PC-3 (cell line): ENCODE measurements at regions of chr3 and their contacts with region 1.

Region 1: DNA sequence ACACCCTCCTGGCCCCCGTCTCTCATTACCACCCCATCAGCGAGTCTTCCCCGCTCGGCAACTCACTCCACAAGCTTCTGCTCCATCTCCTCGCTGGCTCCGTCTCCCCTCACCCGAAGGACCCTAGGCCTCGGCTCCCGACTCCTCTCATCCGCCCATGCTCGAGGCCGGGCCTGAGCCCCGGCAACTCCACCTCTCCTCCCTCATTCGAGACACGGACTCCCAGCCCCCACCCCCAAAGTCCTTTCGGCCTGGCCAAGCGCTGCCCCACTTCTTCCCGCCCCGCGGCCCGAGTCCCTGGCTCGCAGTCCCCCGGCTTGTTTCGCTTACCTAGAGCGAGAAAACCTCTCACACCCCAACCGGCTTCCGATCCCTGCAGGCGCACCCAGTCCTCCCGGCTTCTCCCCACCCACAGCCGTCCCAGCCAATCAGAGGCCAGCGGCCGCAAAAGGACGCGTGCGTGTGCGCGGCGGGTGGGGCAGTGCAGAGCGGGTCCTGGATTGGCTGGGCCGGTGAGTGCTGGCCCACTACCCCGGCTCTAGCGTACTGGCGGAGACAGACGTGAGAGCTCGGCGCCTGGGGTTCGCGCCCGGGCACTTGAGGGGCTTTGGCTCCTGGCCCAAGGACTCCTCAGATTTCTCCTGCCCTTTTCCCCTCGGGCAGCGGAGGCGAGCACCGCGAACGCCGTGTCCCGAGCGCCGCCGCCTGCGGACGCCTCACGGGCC is at the start of gene HIGD1A:
- DNase-seq: peak; percentile 98
- ATAC-seq: peak; percentile 96
- H3K4me3 ChIP-seq: peak within 1 kb of the TSS; percentile 97
- H3K27ac ChIP-seq: peak within 1 kb of the TSS; percentile 89
- H3K4me1 ChIP-seq: peaks cover 34% of the 10 kb centered on the region
- H3K27me3 ChIP-seq: no peaks in the 10 kb centered on the region
- CTCF ChIP-seq: no peak
- total RNA-seq, gene HIGD1A: 118 and 154 TPM in 2 replicates

Region 2: DNA sequence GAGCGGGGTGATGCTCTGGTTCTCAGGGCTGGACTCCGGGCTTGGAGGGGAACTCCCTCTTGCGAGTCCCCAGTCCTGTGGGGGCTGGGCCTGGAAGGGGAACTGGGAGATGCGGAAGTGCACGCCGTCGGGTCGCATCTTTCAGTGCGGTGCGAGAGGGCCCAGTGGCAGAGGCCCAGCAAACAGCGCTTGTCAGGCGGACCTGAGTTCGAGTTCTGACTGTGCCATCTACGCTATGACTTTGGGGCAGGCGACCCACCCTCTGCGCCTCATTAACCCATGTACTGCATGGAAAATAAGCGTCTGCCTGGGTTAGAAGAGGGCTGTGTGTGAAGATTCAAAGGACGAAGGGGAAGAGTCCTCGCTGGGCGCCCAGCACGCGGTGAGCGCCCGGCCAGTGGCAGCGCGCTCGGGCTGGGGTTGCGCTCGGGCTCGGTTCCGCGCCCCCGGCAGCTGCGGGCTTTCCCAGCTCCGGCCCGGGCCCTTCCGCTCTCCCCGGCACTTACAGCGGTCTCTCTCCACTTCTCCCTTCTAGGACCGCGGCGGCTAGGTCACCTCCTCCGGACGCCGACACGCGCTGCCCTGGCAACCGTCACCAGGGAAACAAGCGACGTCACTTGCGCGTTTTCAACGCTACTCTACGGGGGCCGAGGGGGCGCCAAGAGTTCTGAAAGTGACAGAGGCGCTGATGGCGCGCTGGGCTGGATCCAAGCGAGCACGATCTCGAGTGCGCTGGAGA is 31.4 kb before region 1 on chr3 and contains the start of gene CCDC13:
- CTCF ChIA-PET with region 1: no interaction called
- POLR2A ChIA-PET with region 1: no interaction called
- intact Hi-C with region 1: no loop called
- DNase-seq: no peak
- ATAC-seq: peak; percentile 16; the same call in 1 of the 2 replicates
- H3K4me3 ChIP-seq: no peak within 1 kb of the TSS; the same call in 1 of the 2 replicates
- H3K27ac ChIP-seq: no peak within 1 kb of the TSS
- H3K4me1 ChIP-seq: peaks cover 21% of the 10 kb centered on the region
- H3K27me3 ChIP-seq: no peaks in the 10 kb centered on the region
- CTCF ChIP-seq: no peak
- total RNA-seq, gene CCDC13: 0.47 TPM in 1 of 2 replicates, not detected in the other

Region 3: DNA sequence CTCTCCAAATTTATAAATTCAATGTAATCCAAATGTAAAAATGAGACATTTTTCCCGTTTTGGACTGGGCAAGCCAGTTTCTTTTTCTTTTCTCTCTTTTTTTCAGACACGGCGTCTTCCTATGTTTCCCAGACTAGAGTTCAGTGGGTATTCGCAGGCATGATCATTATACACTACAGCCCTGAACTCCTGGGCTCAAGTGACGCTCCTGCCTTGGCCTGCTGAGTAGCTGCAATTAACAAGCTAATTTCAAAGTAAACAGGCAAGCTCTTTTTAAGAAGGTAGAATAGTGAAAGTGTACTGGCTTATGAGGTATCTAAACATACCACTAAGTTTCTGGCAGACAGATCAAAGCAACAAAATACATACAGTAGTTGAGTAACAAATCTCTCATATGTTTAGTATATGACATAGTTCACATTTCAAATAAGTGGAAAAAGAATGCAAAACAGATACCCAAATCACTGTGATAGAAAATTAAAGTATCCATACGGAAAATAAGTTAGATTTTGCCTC is 13.5 kb before region 1 on chr3:
- CTCF ChIA-PET with region 1: no interaction called
- POLR2A ChIA-PET with region 1: interaction called, 17 read pairs
- intact Hi-C with region 1: no loop called
- DNase-seq: no peak
- ATAC-seq: peak; percentile 53
- H3K4me3 ChIP-seq: no peak overlapping the region
- H3K27ac ChIP-seq: no peak overlapping the region
- H3K4me1 ChIP-seq: no peaks in the 10 kb centered on the region
- H3K27me3 ChIP-seq: no peaks in the 10 kb centered on the region
- CTCF ChIP-seq: no peak

Region 4: DNA sequence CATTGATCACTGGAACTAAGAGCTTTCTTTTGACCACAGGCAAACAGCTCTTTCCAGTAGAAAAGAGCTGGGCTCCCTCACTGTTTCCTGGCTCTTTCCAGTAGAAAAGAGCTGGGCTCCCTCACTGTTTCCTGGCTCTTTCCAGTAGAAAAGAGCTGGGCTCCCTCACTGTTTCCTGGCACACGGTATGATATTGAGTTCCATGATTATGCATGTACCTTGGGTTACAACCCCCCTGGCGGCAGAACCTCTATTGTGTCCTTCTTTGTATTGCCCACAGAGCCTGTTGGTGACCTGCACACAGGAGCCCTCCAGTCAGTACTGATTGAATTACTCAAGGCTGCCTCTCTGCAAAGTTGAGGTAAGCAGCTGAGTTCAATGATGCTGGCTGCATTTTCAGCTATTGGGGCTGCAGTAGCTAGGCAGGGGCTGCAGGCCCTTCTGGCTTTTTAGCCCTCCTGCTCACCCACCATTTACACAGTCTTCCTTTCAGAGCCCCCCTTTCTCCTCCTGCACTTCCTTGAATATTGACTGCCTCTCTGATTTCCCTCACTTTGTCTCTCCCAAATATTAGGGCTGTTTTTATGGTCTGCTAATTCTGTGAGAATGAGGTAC is 15.2 kb after region 1 on chr3:
- CTCF ChIA-PET with region 1: no interaction called
- POLR2A ChIA-PET with region 1: interaction called, 34 read pairs
- intact Hi-C with region 1: loop called (anchors 1 kb)
- DNase-seq: peak; percentile 59
- ATAC-seq: peak; percentile 21
- H3K4me3 ChIP-seq: peak overlapping the region; percentile 32
- H3K27ac ChIP-seq: peak overlapping the region; percentile 99
- H3K4me1 ChIP-seq: peaks cover 59% of the 10 kb centered on the region
- H3K27me3 ChIP-seq: no peaks in the 10 kb centered on the region
- CTCF ChIP-seq: no peak; the same call in 1 of the 2 replicates

Region 5: GRCh38 chr3:42852441-42852840 is 48.2 kb after region 1 on chr3:
- CTCF ChIA-PET with region 1: no interaction called
- POLR2A ChIA-PET with region 1: no interaction called
- intact Hi-C with region 1: no loop called
- DNase-seq: no peak
- ATAC-seq: no peak; the same call in 1 of the 2 replicates
- H3K4me3 ChIP-seq: no peak overlapping the region
- H3K27ac ChIP-seq: no peak overlapping the region
- H3K4me1 ChIP-seq: no peaks in the 10 kb centered on the region
- H3K27me3 ChIP-seq: no peaks in the 10 kb centered on the region
- CTCF ChIP-seq: no peak